B cell (primary cell): ENCODE measurements at regions of chr6 and their contacts with region 1.

Region 1: DNA sequence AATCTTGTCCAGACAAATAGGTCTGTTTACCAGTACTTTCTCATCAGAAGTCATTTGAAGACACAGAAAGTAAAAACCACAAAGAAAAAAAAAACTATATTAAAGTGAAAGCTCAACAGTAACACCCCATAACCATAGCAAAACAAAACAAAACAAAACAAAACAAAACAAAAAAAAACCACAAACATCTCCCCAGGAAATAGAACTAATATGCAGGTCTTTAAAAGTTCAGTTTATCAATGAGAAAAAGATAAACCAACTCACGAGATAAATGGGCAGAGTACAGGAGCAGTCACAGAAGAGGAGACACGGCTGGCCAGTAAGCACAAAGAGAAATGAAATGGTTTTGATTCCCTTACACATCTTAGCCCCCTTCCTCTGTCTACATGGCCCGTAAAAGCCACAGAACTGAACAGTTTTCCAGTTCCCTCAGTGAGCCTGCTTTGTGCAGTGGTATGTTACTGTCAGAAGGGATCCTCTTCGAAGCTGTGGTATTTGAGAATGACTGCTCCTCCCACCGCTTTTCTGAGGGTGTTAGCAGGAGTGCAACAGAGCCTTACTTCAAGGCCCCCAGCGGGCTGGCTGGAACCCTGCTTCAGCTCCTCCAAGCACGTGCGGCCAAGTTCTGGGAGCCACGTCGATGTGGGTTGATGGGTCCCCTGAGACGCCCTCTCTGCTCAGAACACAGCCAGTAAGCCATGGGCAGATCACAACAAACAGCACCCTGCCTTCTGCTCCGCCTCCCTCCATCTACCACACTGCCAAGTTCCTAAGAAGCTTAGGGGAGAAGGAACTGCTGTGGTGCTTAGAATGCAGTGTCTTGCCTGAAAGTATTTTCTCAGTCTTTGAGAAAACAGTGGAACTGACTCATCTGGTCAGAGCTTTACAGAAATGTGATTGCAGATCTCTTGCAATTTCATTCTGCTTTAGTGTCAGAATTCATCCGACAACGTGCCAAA is 14.0 kb downstream of the UST start:
- DNase-seq: peak; percentile 94
- ATAC-seq: peak; percentile 62
- H3K4me3 ChIP-seq: peak overlapping the region; percentile 28 to 61 (median 44)
- H3K4me3 Mint-ChIP-seq: peak overlapping the region; percentile 85
- H3K27ac ChIP-seq: peak overlapping the region; percentile 98
- H3K27ac Mint-ChIP-seq: peak overlapping the region; percentile 93
- H3K4me1 ChIP-seq: peaks cover 81 to 82% of the 10 kb centered on the region in 2 donors
- H3K4me1 Mint-ChIP-seq: peaks cover 94% of the 10 kb centered on the region
- H3K27me3 ChIP-seq: no peaks in the 10 kb centered on the region
- H3K27me3 Mint-ChIP-seq: no peaks in the 10 kb centered on the region
- CTCF ChIP-seq: no peak

Region 2: GRCh38 chr6:148746363-148747144 is 14.3 kb before region 1 on chr6 and contains the start of gene UST:
- CTCF ChIA-PET with region 1: interaction called, 63 read pairs
- POLR2A ChIA-PET with region 1: interaction called, 45 read pairs
- intact Hi-C with region 1: loop called (anchors 1 kb)
- DNase-seq: peak; percentile 90
- ATAC-seq: peak; percentile 40
- H3K4me3 ChIP-seq: peak within 1 kb of the TSS; percentile 65 to 92 (median 84)
- H3K4me3 Mint-ChIP-seq: peak within 1 kb of the TSS; percentile 98
- H3K27ac ChIP-seq: peak within 1 kb of the TSS; percentile 77 to 88
- H3K27ac Mint-ChIP-seq: peak within 1 kb of the TSS; percentile 95
- H3K4me1 ChIP-seq: peaks cover 18 to 30% of the 10 kb centered on the region in 2 donors
- H3K4me1 Mint-ChIP-seq: peaks cover 40% of the 10 kb centered on the region
- H3K27me3 ChIP-seq: no peaks in the 10 kb centered on the region
- H3K27me3 Mint-ChIP-seq: no peaks in the 10 kb centered on the region
- CTCF ChIP-seq: peak; percentile 78
- total RNA-seq, gene UST: 16.9 TPM in 2 replicates

Region 3: DNA sequence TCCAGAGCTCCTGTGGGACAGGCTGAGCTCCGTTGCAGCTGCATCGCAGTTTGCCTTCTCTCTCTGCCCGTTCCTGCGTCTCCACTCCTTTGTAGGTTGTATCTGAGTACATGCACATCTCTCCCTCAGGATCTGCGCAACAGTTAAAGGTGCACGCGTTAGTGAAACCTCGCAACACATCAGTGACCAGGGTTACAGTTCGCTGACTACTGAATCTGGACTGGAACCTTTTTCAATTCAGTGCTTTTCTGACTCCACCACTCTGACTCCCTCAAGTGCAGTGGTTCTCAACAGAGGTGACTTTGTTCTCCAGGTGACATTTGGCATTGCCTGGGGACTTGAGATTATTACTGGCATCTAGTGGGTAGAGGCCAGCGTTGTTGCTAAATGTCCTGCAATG is 30.0 kb after region 1 on chr6:
- CTCF ChIA-PET with region 1: interaction called, 3 read pairs
- POLR2A ChIA-PET with region 1: no interaction called
- intact Hi-C with region 1: loop called (anchors 5 kb)
- DNase-seq: peak; percentile 42
- ATAC-seq: peak; percentile 72
- H3K4me3 ChIP-seq: no peak overlapping the region
- H3K4me3 Mint-ChIP-seq: peak overlapping the region; percentile 54
- H3K27ac ChIP-seq: no peak overlapping the region
- H3K27ac Mint-ChIP-seq: no peak overlapping the region
- H3K4me1 ChIP-seq: peaks cover 18 to 22% of the 10 kb centered on the region in 2 donors
- H3K4me1 Mint-ChIP-seq: peaks cover 40% of the 10 kb centered on the region
- H3K27me3 ChIP-seq: no peaks in the 10 kb centered on the region
- H3K27me3 Mint-ChIP-seq: no peaks in the 10 kb centered on the region
- CTCF ChIP-seq: no peak

Region 4: DNA sequence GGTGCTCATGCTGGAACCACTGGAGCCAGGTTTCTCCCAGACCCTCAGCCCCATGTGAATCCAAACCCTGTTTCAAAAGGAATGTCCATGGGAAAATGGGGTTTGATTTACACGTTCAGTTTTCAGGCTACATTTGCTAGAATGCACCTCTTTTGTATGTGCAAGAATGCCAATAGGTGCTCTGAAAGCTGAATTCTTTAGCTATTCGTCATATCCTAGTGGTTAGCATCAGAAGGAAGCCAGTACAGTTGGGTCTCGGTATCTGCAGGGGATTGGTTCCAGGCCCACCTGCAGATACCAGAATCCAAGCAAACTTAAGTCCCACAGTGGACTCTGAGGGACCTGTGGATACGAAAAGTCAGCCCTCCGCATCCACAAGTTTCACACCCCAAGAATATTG is 79.4 kb after region 1 on chr6:
- CTCF ChIA-PET with region 1: no interaction called
- POLR2A ChIA-PET with region 1: no interaction called
- intact Hi-C with region 1: no loop called
- DNase-seq: no peak
- ATAC-seq: no peak
- H3K4me3 ChIP-seq: no peak overlapping the region
- H3K4me3 Mint-ChIP-seq: no peak overlapping the region
- H3K27ac ChIP-seq: no peak overlapping the region
- H3K27ac Mint-ChIP-seq: no peak overlapping the region
- H3K4me1 ChIP-seq: peaks cover 3 to 10% of the 10 kb centered on the region in 2 donors
- H3K4me1 Mint-ChIP-seq: peaks cover 27% of the 10 kb centered on the region
- H3K27me3 ChIP-seq: no peaks in the 10 kb centered on the region
- H3K27me3 Mint-ChIP-seq: no peaks in the 10 kb centered on the region
- CTCF ChIP-seq: no peak

Region 5: DNA sequence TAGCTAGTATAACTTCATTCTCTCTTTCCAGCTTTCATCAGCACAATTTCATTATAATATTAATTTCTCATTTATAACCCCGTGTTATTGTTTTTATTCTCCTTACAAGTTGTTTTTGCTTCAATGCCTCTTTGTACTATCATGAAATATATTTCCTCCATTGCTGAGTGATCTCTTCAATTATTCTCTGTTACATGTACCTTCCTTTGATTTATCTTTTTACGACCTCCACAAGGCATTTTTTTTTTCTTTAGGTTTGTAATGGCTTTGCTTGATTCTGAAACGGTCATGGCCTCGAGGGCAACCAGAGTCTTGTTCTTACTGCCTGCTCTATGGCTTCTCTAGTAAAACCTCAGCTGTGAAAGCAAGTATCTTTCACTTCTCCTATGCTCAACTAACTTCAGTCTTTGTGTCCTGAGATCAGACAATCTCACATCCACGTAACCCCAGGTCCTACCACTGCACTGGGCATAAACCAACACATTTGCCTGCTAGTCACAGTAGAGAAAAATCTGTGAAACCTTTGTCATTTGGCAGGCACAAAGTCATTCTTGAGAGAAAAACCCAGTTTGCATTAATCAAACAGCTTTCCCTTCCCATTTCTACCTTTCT is 105.9 kb after region 1 on chr6:
- CTCF ChIA-PET with region 1: interaction called, 6 read pairs
- POLR2A ChIA-PET with region 1: no interaction called
- intact Hi-C with region 1: loop called (anchors 2 kb)
- DNase-seq: peak; percentile 74
- ATAC-seq: peak; percentile 91
- H3K4me3 ChIP-seq: peak overlapping the region in 1 of 5 experiments; percentile 8
- H3K4me3 Mint-ChIP-seq: peak overlapping the region; percentile 80
- H3K27ac ChIP-seq: peak overlapping the region; percentile 48 to 57
- H3K27ac Mint-ChIP-seq: peak overlapping the region; percentile 89
- H3K4me1 ChIP-seq: peaks cover 45 to 55% of the 10 kb centered on the region in 2 donors
- H3K4me1 Mint-ChIP-seq: peaks cover 81% of the 10 kb centered on the region
- H3K27me3 ChIP-seq: no peaks in the 10 kb centered on the region
- H3K27me3 Mint-ChIP-seq: no peaks in the 10 kb centered on the region
- CTCF ChIP-seq: no peak

Region 6: DNA sequence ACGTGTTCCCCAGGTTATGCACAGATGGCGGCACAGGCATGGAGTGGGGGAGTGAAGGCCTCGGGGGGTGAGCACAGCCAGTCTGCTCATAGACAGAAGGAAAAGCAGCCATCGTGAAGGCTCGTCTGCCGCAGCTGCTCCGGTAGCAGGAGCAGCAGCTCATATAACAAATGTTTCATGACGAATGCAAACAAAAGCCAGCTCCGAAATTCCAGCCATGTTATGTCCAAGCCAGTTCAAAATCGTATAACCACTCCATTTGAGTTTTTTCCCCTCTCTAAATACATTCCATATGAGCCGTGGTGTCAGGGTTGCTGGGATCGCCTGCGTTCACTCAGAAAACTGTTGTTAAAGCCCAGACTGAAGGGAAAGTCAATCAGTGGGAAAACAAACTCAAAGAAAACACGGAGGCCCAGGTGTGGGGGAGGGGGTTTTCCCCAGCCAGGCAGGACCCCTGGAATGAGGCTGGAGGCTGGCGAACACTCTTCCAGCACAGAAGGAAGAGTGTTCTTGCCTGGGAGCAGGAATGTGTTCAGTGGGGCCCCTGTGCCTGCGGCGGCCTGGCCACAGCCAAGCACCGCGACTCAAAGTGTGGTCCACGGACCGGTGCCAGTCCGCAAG is 276.3 kb after region 1 on chr6:
- CTCF ChIA-PET with region 1: no interaction called
- POLR2A ChIA-PET with region 1: no interaction called
- intact Hi-C with region 1: no loop called
- DNase-seq: no peak
- ATAC-seq: no peak
- H3K4me3 ChIP-seq: no peak overlapping the region
- H3K4me3 Mint-ChIP-seq: no peak overlapping the region
- H3K27ac ChIP-seq: no peak overlapping the region
- H3K27ac Mint-ChIP-seq: no peak overlapping the region
- H3K4me1 ChIP-seq: peaks cover 3 to 12% of the 10 kb centered on the region in 2 donors
- H3K4me1 Mint-ChIP-seq: peaks cover 13% of the 10 kb centered on the region
- H3K27me3 ChIP-seq: no peaks in the 10 kb centered on the region
- H3K27me3 Mint-ChIP-seq: no peaks in the 10 kb centered on the region
- CTCF ChIP-seq: no peak

Region 7: DNA sequence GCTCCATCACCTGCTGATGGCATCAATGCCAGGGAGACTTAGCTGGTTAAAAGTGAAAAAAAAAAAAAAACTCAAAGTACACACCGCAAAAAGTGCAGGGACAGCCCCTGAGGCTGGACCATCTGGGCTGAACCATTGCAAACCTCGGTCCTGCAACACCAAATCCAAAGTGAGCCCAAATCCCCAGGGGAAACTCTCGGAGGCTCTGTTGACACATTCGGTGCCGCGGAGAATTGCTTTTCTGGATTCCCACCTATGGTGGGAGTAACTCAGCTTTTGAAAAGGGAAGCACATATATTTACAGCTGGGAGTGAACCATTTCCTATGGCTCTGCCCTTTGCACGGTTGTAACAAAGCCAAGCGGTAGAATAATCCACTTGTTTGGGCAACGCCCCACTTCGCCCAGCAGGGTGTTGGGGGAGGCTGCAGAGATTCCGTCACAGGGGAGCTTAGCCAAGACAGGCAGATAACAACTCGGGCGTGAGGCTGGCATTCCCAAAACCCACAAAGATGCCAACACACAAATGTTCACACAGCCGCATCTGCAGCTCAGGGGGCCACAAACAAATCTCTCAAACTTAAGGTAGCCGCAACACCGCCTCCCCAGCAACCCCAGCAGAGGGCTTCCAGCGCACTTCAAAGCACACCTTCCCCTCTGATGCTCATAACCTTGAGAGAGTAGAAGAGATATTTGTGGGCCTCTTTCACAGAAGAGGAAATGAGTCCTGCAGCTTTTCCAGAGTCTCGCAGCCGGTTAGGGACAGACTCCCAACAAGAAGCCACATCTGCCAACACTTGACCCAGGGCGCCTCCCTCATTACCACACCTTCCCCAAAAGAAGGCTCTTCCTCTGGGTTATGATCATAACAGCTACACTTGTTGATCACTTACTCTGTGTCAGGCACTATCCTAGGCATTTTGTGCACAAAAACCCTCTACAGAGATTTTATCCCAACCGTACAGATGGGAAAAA is 712.5 kb after region 1 on chr6:
- CTCF ChIA-PET with region 1: no interaction called
- POLR2A ChIA-PET with region 1: interaction called, 4 read pairs
- intact Hi-C with region 1: loop called (anchors 5 kb)
- DNase-seq: peak; percentile 65
- ATAC-seq: peak; percentile 34
- H3K4me3 ChIP-seq: peak overlapping the region in 4 of 5 experiments; percentile 5 to 55 (median 38)
- H3K4me3 Mint-ChIP-seq: peak overlapping the region; percentile 89
- H3K27ac ChIP-seq: peak overlapping the region; percentile 67 to 84
- H3K27ac Mint-ChIP-seq: peak overlapping the region; percentile 94
- H3K4me1 ChIP-seq: peaks cover 87 to 98% of the 10 kb centered on the region in 2 donors
- H3K4me1 Mint-ChIP-seq: peaks cover 84% of the 10 kb centered on the region
- H3K27me3 ChIP-seq: no peaks in the 10 kb centered on the region
- H3K27me3 Mint-ChIP-seq: no peaks in the 10 kb centered on the region
- CTCF ChIP-seq: peak; percentile 48